Spleen (tissue), 13 donors: ENCODE measurements at regions of chr11 and their contacts with region 1.

Region 1: DNA sequence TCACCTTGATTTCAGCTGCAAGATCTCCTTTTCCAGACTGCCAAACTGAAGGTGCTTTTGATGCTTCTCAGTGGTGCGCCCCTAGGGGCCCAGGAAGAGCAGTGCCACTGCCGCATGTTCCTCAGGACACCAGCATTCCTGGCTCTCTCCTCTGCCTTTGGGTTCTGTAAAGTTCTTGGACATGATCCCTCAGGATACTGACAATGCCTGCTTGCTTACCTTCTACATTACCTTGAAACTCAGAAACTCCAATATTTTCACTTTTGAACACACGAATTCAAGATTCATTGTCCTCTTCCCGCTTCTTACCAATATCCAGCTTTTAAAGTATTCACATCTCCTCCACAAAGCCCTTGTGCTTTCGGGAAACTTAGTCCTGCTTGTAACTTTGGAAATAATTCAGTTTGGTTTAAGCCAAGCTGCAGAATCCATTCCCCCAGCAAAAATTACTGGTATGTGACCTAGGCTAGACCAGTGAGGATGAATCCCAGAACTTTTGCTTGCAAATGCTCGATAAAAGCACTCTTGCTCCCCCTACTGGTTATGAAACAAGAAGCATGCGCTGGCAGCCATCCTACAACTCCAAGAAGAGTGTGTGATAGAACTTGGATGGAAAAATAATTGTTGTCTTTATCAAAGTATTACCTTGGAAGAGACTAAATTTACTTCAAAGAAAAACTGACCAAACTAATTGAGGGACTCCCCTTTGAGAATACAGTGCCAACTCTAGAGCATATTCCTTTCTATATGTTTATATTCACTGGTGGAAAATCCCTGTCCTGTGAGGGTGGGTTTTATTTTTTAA is 16.5 kb upstream of the OR5B21 start:
- DNase-seq: no peak
- H3K4me3 ChIP-seq: peak overlapping the region in 5 of 8 donors; percentile 4 to 41 (median 10)
- H3K27ac ChIP-seq: peak overlapping the region; percentile 28 to 81 (median 74)
- H3K4me1 ChIP-seq: peaks cover 11 to 37% (median 27%) of the 10 kb centered on the region in 6 donors
- H3K27me3 ChIP-seq: no peaks in the 10 kb centered on the region
- CTCF ChIP-seq: peak; percentile 27 to 84 (median 73)
- POLR2A ChIP-seq: no peak

Region 2: DNA sequence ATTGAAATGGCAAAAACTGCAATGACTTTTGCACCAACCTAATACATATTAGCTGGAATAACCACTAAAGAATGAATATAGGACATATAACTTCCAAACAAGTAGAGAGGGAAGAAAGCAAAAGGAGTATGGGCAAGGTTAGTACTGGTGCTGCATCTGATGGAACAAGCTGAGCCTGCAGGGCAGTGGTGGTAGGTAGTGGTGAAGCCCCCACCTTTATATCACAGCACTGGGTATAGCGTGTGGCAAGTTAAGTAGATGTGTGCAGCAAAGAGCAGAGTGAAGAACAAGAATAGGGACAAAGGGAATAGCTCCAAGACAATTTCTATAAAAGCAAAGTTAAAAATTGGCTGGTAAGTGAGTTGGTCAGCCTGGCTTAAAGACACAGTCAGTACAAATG is 700.6 kb before region 1 on chr11:
- intact Hi-C with region 1: loop called (anchors 10 kb)
- DNase-seq: no peak
- H3K4me3 ChIP-seq: no peak overlapping the region
- H3K27ac ChIP-seq: no peak overlapping the region
- H3K4me1 ChIP-seq: no peaks in the 10 kb centered on the region
- H3K27me3 ChIP-seq: no peaks in the 10 kb centered on the region
- CTCF ChIP-seq: no peak
- POLR2A ChIP-seq: no peak

Region 3: DNA sequence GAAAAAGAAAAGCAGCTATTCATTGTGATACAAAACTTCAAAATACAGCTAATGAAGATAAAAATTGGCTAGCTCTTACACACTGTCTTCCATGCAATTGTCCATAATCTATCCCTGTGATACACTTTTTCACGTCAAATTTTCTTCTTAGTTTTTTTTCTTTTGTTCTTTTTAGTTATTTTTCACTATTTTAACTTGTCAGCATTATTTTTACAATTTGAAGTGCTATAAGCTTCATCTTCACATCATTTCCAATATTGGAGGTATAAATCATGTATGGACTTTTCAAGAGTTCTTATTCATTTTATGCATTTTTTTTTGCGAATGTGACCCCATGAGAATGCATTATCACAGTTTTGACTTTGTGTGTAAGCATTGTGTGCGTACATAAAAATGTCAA is 169.7 kb before region 1 on chr11:
- intact Hi-C with region 1: no loop called
- DNase-seq: no peak
- H3K4me3 ChIP-seq: no peak overlapping the region
- H3K27ac ChIP-seq: no peak overlapping the region
- H3K4me1 ChIP-seq: no peaks in the 10 kb centered on the region
- H3K27me3 ChIP-seq: no peaks in the 10 kb centered on the region
- CTCF ChIP-seq: no peak
- POLR2A ChIP-seq: no peak